Activated CD8-positive, alpha-beta T cell treated with anti-CD3 and anti-CD28 coated beads for 36 hours (primary cell): ENCODE measurements at regions of chr20 and their contacts with region 1.

Region 1: DNA sequence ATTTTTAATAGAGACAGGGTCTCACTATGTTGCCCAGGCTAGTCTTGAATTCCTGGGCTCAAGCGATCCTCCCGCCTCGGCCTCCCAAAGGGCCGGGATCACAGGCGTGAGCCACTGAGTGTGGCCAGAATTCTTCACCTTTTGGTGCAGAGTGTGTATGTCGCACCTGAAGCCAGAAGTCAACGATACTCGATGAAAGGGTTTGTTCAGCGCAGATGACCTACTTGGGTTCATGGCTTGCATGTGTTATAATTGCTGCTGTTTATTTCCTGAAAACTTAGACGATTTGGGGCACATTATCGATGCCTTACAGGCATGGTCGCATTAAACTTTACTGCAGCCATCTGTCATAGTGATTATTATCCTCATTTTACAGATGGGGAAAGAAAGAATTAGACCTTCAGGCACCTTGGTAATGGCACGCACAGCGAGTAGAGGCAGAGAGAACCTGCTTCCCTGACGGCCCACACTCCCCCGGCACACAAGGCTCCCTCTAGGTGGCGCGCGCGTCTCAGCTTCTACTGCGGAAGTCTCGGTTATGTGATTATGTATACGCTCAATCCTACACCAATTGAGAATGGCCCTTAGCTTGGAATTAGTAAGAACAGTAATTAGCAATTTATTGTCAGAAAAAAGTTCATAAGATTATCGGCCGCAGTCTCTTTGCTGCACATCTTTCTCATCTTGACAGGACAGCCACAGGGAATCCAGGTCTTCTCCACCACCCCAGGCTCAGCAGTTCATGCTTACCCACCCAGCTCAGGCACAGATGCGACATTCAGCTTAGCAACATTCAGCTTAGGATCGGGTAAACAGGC is 212.8 kb upstream of the PROKR2 start:
- DNase-seq: peak; percentile 96
- ATAC-seq: peak; percentile 96
- H3K4me3 Mint-ChIP-seq: peak overlapping the region; percentile 35
- H3K27ac Mint-ChIP-seq: peak overlapping the region; percentile 64
- H3K4me1 Mint-ChIP-seq: peaks cover 17% of the 10 kb centered on the region
- H3K27me3 Mint-ChIP-seq: no peaks in the 10 kb centered on the region
- CTCF ChIP-seq: peak; percentile 52

Region 2: GRCh38 chr20:5279661-5280060 is 249.9 kb before region 1 on chr20:
- CTCF ChIA-PET with region 1: no interaction called
- POLR2A ChIA-PET with region 1: no interaction called
- intact Hi-C with region 1: no loop called
- DNase-seq: no peak
- ATAC-seq: no peak
- H3K4me3 Mint-ChIP-seq: no peak overlapping the region
- H3K27ac Mint-ChIP-seq: no peak overlapping the region
- H3K4me1 Mint-ChIP-seq: no peaks in the 10 kb centered on the region
- H3K27me3 Mint-ChIP-seq: peaks cover 23% of the 10 kb centered on the region
- CTCF ChIP-seq: no peak

Region 3: GRCh38 chr20:5543385-5543784 is 13.8 kb after region 1 on chr20:
- CTCF ChIA-PET with region 1: interaction called, 11 read pairs
- POLR2A ChIA-PET with region 1: interaction called, 4 read pairs
- intact Hi-C with region 1: no loop called
- DNase-seq: no peak
- ATAC-seq: no peak
- H3K4me3 Mint-ChIP-seq: no peak overlapping the region
- H3K27ac Mint-ChIP-seq: no peak overlapping the region
- H3K4me1 Mint-ChIP-seq: peaks cover 14% of the 10 kb centered on the region
- H3K27me3 Mint-ChIP-seq: no peaks in the 10 kb centered on the region
- CTCF ChIP-seq: no peak

Region 4: DNA sequence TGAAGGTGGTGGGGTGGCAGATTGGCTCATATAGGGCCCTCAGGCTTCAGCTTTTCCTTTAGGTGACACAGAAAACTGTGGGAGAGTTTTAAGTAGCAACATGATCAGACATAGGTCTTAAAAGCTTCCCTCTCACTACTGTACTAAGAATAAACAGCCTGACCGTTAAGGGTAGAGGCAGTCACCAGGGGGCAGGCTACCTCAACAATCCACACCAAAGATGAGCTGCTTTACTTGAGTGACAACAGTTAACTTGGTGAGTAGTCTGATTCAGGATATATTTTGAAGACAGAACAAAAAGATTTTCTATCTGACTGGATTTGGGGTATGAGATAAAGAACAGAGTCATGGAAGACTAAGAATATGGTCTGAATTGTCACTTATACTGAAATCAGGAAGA is 27.6 kb after region 1 on chr20:
- CTCF ChIA-PET with region 1: interaction called, 51 read pairs
- POLR2A ChIA-PET with region 1: interaction called, 3 read pairs
- intact Hi-C with region 1: no loop called
- DNase-seq: peak; percentile 79
- ATAC-seq: peak; percentile 79
- H3K4me3 Mint-ChIP-seq: no peak overlapping the region
- H3K27ac Mint-ChIP-seq: peak overlapping the region; percentile 18
- H3K4me1 Mint-ChIP-seq: no peaks in the 10 kb centered on the region
- H3K27me3 Mint-ChIP-seq: no peaks in the 10 kb centered on the region
- CTCF ChIP-seq: peak; percentile 73

Region 5: GRCh38 chr20:5667705-5668528 is 138.4 kb after region 1 on chr20:
- CTCF ChIA-PET with region 1: no interaction called
- POLR2A ChIA-PET with region 1: no interaction called
- intact Hi-C with region 1: no loop called
- DNase-seq: no peak
- ATAC-seq: no peak
- H3K4me3 Mint-ChIP-seq: no peak overlapping the region
- H3K27ac Mint-ChIP-seq: no peak overlapping the region
- H3K4me1 Mint-ChIP-seq: peaks cover 2% of the 10 kb centered on the region
- H3K27me3 Mint-ChIP-seq: no peaks in the 10 kb centered on the region
- CTCF ChIP-seq: no peak

Region 6: GRCh38 chr20:5780846-5781217 is 251.3 kb after region 1 on chr20:
- CTCF ChIA-PET with region 1: interaction called, 194 read pairs
- POLR2A ChIA-PET with region 1: interaction called, 3 read pairs
- intact Hi-C with region 1: no loop called
- DNase-seq: no peak
- ATAC-seq: peak; percentile 58
- H3K4me3 Mint-ChIP-seq: no peak overlapping the region
- H3K27ac Mint-ChIP-seq: peak overlapping the region; percentile 57
- H3K4me1 Mint-ChIP-seq: peaks cover 8% of the 10 kb centered on the region
- H3K27me3 Mint-ChIP-seq: no peaks in the 10 kb centered on the region
- CTCF ChIP-seq: no peak

Region 7: DNA sequence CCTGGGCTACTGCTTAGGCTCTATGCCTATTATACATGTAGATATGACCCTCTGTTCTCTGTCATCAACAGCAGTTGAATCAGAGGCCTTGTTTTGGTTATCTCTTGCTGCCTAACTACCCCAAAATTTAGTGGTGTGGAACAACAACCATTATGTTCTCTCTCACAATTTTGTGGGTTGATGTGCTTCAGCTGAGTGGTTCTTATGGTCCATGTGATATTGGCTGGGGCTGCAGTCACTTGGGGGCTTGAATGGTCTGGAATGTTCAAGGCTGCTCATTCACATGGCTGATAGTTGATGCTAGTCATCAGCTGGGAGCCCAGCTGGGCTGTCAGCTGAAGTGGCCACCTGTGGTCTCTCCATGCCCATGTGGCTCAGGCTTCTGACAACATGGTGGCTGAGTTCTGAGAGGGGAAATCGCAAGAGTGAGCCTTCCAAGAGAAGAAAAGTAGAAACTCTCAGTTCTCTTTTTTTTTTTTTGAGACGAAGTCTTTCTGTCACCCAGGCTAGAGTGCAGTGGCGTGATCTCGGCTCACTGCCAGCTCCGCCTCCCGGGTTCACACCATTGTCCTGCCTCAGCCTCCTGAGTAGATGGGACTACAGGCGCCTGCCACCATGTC is 268.4 kb after region 1 on chr20:
- CTCF ChIA-PET with region 1: interaction called, 194 read pairs
- POLR2A ChIA-PET with region 1: no interaction called
- intact Hi-C with region 1: no loop called
- DNase-seq: no peak
- ATAC-seq: no peak
- H3K4me3 Mint-ChIP-seq: no peak overlapping the region
- H3K27ac Mint-ChIP-seq: no peak overlapping the region
- H3K4me1 Mint-ChIP-seq: no peaks in the 10 kb centered on the region
- H3K27me3 Mint-ChIP-seq: no peaks in the 10 kb centered on the region
- CTCF ChIP-seq: no peak

Region 8: GRCh38 chr20:5945963-5946362 is 416.4 kb after region 1 on chr20:
- CTCF ChIA-PET with region 1: interaction called, 5 read pairs
- POLR2A ChIA-PET with region 1: no interaction called
- intact Hi-C with region 1: loop called (anchors 5 kb)
- DNase-seq: peak; percentile 8
- ATAC-seq: no peak
- H3K4me3 Mint-ChIP-seq: no peak overlapping the region
- H3K27ac Mint-ChIP-seq: no peak overlapping the region
- H3K4me1 Mint-ChIP-seq: peaks cover 44% of the 10 kb centered on the region
- H3K27me3 Mint-ChIP-seq: peaks cover 2% of the 10 kb centered on the region
- CTCF ChIP-seq: no peak